Keratinocyte (primary cell): ENCODE measurements at regions of chr3 and their contacts with region 1.

Region 1: DNA sequence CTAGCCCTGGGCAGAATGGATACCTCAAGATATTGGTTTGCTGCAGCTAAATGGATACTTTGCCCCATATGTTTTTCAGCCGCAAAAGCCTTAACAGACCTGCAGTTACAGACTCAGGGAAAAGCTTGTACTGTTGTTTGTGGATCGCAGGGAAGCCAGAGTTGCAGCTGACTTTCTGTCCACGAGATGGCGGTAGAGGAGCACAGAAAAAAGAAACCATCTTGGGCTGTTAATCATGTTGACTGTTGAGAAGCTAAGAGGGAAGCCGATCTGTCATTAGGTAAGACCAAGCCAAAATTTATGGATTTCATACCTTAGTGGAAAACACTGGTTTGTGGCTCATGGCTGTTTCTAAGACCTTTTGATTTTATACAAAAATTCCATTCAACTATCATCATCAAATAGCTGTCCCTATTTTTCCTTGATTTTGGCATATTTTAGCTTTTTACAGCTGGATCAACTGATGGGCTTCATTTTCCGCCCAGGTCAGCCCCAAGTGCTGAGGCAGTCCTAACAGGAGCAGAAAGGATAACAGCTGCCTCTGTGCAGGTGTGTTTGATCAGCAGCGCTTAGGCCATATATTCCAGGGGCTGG is 205.7 kb upstream of the ZPLD1 start:
- DNase-seq: peak; percentile 36
- H3K4me3 ChIP-seq: no peak overlapping the region
- H3K27ac ChIP-seq: no peak overlapping the region
- H3K4me1 ChIP-seq: peaks cover 5% of the 10 kb centered on the region
- H3K27me3 ChIP-seq: no peaks in the 10 kb centered on the region
- CTCF ChIP-seq: peak; percentile 83 to 93 (median 84)

Region 2: DNA sequence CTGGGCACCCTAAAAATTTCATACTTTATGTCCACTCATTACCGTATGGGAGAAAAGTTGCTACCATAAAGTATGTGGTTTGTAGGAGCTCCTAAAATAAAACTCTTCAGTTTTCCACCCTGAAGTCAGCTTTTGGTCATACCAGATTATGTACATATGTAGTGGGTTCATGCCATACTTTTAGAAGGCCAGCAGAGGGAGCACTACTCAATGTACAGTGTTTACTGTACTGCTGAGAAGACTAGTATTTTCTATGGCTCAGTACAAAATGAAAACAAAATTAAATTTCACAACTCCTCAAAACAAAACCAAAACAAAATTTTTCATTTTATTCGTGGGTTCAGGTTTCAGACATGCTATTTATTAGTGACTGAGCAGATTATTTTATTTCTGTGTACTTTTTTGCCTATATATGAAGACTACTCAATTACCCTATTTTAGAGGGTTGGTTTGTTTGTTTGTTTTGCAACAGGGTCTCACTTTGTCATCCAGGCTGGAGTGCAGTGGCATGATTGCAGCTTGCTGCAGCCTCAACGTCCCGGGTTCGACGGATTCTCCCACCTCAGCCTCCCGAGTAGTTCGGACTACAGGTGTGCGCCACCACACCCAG is 425.9 kb before region 1 on chr3:
- dilution Hi-C with region 1: loop called (anchors 10 kb)
- DNase-seq: no peak
- H3K4me3 ChIP-seq: no peak overlapping the region
- H3K27ac ChIP-seq: no peak overlapping the region
- H3K4me1 ChIP-seq: no peaks in the 10 kb centered on the region
- H3K27me3 ChIP-seq: no peaks in the 10 kb centered on the region
- CTCF ChIP-seq: peak in 2 of 3 experiments; percentile 63 to 75

Region 3: GRCh38 chr3:102104033-102104432 is 125.1 kb before region 1 on chr3:
- dilution Hi-C with region 1: no loop called
- DNase-seq: no peak
- H3K4me3 ChIP-seq: no peak overlapping the region
- H3K27ac ChIP-seq: no peak overlapping the region
- H3K4me1 ChIP-seq: no peaks in the 10 kb centered on the region
- H3K27me3 ChIP-seq: no peaks in the 10 kb centered on the region
- CTCF ChIP-seq: no peak

Region 4: GRCh38 chr3:102180291-102181039 is 48.7 kb before region 1 on chr3:
- dilution Hi-C with region 1: no loop called
- DNase-seq: no peak
- H3K4me3 ChIP-seq: peak overlapping the region in 1 of 3 experiments; percentile 45
- H3K27ac ChIP-seq: peak overlapping the region; percentile 37
- H3K4me1 ChIP-seq: peaks cover 36% of the 10 kb centered on the region
- H3K27me3 ChIP-seq: no peaks in the 10 kb centered on the region
- CTCF ChIP-seq: no peak

Region 5: DNA sequence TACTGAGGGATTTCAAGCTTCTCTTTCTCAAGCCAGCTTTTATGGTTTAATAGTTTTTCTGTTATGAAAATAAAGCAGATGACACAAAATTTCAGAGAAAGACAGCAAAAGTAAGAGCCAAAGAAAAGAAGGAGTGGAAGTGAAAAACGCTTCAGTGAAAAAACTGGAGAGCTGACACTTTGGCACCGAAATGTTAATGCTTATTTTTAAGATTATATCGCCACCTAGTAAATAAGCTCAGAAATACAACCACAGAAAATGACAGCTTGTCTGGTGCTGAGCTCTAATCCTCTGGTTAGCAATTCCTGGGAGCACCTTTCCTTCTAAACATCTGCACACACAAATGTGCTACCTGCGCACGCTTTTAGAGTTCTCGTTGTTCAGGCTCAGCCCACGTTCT is 307.3 kb after region 1 on chr3:
- dilution Hi-C with region 1: loop called (anchors 25 kb)
- DNase-seq: no peak
- H3K4me3 ChIP-seq: no peak overlapping the region
- H3K27ac ChIP-seq: no peak overlapping the region
- H3K4me1 ChIP-seq: no peaks in the 10 kb centered on the region
- H3K27me3 ChIP-seq: peaks cover 3% of the 10 kb centered on the region
- CTCF ChIP-seq: peak in 2 of 3 experiments; percentile 46 to 54